ENCODE measurements at regions of chr10 and their contacts with region 1.

Region 1: GRCh38 chr10:59536167-59536930 is 173.3 kb downstream of the SLC16A9 start:
- DNase-seq: peak; percentile 78
- H3K4me3 ChIP-seq: no peak overlapping the region
- H3K27ac ChIP-seq: peak overlapping the region; percentile 27
- H3K4me1 ChIP-seq: peaks cover 11% of the 10 kb centered on the region
- H3K27me3 ChIP-seq: no peaks in the 10 kb centered on the region
- CTCF ChIP-seq: no peak
- POLR2A ChIP-seq: no peak

Region 2: GRCh38 chr10:59561477-59562121 is 25.2 kb after region 1 on chr10:
- CTCF ChIA-PET with region 1: no interaction called
- POLR2A ChIA-PET with region 1: no interaction called
- dilution Hi-C with region 1: no loop called
- intact Hi-C with region 1: loop called (anchors 1 kb)
- DNase-seq: peak; percentile 35
- H3K4me3 ChIP-seq: no peak overlapping the region
- H3K27ac ChIP-seq: no peak overlapping the region
- H3K4me1 ChIP-seq: no peaks in the 10 kb centered on the region
- H3K27me3 ChIP-seq: no peaks in the 10 kb centered on the region
- CTCF ChIP-seq: no peak
- POLR2A ChIP-seq: no peak

Region 3: GRCh38 chr10:59585046-59585700 is 48.8 kb after region 1 on chr10:
- CTCF ChIA-PET with region 1: no interaction called
- POLR2A ChIA-PET with region 1: no interaction called
- dilution Hi-C with region 1: no loop called
- intact Hi-C with region 1: no loop called
- DNase-seq: peak; percentile 48
- H3K4me3 ChIP-seq: no peak overlapping the region
- H3K27ac ChIP-seq: no peak overlapping the region
- H3K4me1 ChIP-seq: no peaks in the 10 kb centered on the region
- H3K27me3 ChIP-seq: no peaks in the 10 kb centered on the region
- CTCF ChIP-seq: no peak
- POLR2A ChIP-seq: no peak

Region 4: DNA sequence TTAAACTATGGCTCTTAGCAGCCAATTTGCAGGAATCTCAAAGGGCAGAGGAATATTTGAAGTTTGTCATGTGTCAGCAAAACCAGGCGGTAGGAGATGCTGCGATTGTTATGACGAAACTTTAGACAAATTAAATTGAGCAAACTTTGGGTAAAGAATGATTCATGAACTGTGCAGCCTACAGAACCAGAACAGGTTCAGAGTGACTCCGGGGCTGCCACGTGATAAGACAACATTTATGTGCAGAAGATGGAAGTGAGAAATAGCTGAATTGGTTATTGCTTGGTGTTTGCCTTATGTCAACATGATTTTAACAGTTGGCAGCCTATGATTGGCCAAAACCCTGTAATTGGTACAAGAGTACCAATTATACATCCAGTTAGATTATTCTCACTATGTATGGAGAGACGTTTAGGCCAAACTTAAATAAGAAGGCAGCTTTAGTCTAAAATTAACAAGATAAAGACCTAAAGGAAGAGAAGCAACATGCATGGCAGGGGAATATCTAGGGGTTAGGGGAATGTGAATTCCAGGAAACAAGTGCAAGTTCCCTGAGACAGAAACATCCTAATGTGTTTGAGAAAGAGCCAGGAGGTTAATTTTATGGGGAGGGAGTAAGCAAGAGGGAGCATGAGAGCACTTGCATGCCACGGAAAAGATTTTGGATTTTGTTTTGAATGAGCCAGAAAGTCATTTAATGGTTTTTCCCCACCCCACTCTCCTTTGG is 409.5 kb after region 1 on chr10:
- CTCF ChIA-PET with region 1: no interaction called
- POLR2A ChIA-PET with region 1: no interaction called
- dilution Hi-C with region 1: no loop called
- intact Hi-C with region 1: no loop called
- DNase-seq: no peak
- H3K4me3 ChIP-seq: no peak overlapping the region
- H3K27ac ChIP-seq: no peak overlapping the region
- H3K4me1 ChIP-seq: no peaks in the 10 kb centered on the region
- H3K27me3 ChIP-seq: no peaks in the 10 kb centered on the region
- CTCF ChIP-seq: no peak
- POLR2A ChIP-seq: no peak

Measured in endothelial cell of umbilical vein (primary cell).